ENCODE measurements at regions of chr17 and their contacts with region 1.

Region 1: GRCh38 chr17:43987131-43988021 is 17.0 kb upstream of the NAGS start:
- DNase-seq: no peak
- ATAC-seq: no peak
- H3K4me3 ChIP-seq: no peak overlapping the region
- H3K4me3 Mint-ChIP-seq: no peak overlapping the region
- H3K27ac ChIP-seq: no peak overlapping the region
- H3K27ac Mint-ChIP-seq: no peak overlapping the region
- H3K4me1 ChIP-seq: no peaks in the 10 kb centered on the region
- H3K4me1 Mint-ChIP-seq: peaks cover 3% of the 10 kb centered on the region
- H3K27me3 ChIP-seq: peaks cover 11 to 14% of the 10 kb centered on the region in 2 experiments
- H3K27me3 Mint-ChIP-seq: peaks cover 35% of the 10 kb centered on the region
- CTCF ChIP-seq: no peak

Region 2: GRCh38 chr17:43814714-43815113 is 172.7 kb before region 1 on chr17:
- CTCF ChIA-PET with region 1: no interaction called
- POLR2A ChIA-PET with region 1: no interaction called
- intact Hi-C with region 1: no loop called
- DNase-seq: no peak
- ATAC-seq: no peak
- H3K4me3 ChIP-seq: no peak overlapping the region
- H3K4me3 Mint-ChIP-seq: no peak overlapping the region
- H3K27ac ChIP-seq: no peak overlapping the region
- H3K27ac Mint-ChIP-seq: no peak overlapping the region
- H3K4me1 ChIP-seq: no peaks in the 10 kb centered on the region
- H3K4me1 Mint-ChIP-seq: no peaks in the 10 kb centered on the region
- H3K27me3 ChIP-seq: no peaks in the 10 kb centered on the region
- H3K27me3 Mint-ChIP-seq: peaks cover 9% of the 10 kb centered on the region
- CTCF ChIP-seq: no peak

Region 3: GRCh38 chr17:43967931-43968330 is 19.4 kb before region 1 on chr17:
- CTCF ChIA-PET with region 1: no interaction called
- POLR2A ChIA-PET with region 1: no interaction called
- intact Hi-C with region 1: loop called in 1 of 2 experiments (anchors 2 kb)
- DNase-seq: no peak
- ATAC-seq: no peak
- H3K4me3 ChIP-seq: no peak overlapping the region
- H3K4me3 Mint-ChIP-seq: no peak overlapping the region
- H3K27ac ChIP-seq: no peak overlapping the region
- H3K27ac Mint-ChIP-seq: no peak overlapping the region
- H3K4me1 ChIP-seq: no peaks in the 10 kb centered on the region
- H3K4me1 Mint-ChIP-seq: no peaks in the 10 kb centered on the region
- H3K27me3 ChIP-seq: no peaks in the 10 kb centered on the region
- H3K27me3 Mint-ChIP-seq: peaks cover 3% of the 10 kb centered on the region
- CTCF ChIP-seq: no peak

Measured in CD8-positive, alpha-beta T cell (primary cell).